ENCODE measurements at regions of chr20 and their contacts with region 1.

Region 1: GRCh38 chr20:63567386-63568169 is 6.5 kb downstream of the HELZ2 start:
- DNase-seq: peak; percentile 88 to 93 (median 92)
- H3K4me3 ChIP-seq: peak overlapping the region; percentile 11 to 73 (median 43)
- H3K4me3 Mint-ChIP-seq: peak overlapping the region; percentile 76 to 87
- H3K27ac ChIP-seq: peak overlapping the region; percentile 72 to 91
- H3K27ac Mint-ChIP-seq: peak overlapping the region; percentile 90 to 97 (median 97)
- H3K4me1 ChIP-seq: peaks cover 33 to 38% of the 10 kb centered on the region in 2 donors
- H3K4me1 Mint-ChIP-seq: peaks cover 26% of the 10 kb centered on the region
- H3K27me3 ChIP-seq: peaks cover 0 to 66% of the 10 kb centered on the region in 2 donors
- H3K27me3 Mint-ChIP-seq: peaks cover 28 to 75% (median 53%) of the 10 kb centered on the region in 3 donors
- CTCF ChIP-seq: peak; percentile 10

Region 2: DNA sequence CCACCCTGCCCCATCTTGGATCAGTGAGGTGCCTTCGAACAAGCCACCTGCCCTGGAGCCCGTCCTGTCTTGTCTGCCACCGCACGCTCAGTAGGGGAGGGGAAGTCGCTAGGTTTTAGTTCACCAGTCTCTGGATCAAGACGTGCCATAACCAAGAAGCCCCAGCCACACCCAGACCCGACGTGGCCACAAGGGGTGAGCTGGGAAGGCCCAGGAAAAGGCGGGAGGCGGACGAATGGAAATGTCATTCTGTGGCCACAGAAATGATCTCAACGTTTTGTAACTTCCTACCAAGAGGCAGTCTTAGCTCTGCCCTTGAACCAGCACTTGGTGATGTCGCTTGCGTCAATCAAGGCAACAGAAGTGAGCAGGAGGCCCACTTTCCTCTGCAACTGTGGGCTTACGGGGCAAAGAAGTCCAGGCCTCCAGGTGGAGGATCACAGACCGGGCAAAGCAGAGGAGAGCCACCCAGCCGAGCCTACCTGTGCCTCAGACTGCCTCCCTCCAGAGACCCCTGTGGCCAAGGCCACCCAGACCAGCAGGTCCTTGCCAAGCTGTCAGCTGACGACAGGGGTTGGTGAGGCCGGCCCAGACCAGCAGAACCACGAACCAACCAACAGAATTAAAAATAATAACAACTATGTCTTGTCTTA is 44.8 kb after region 1 on chr20:
- intact Hi-C with region 1: loop called in 1 of 2 experiments (anchors 2 kb)
- DNase-seq: peak; percentile 82 to 85 (median 84)
- H3K4me3 ChIP-seq: peak overlapping the region in 1 of 3 experiments; percentile 51
- H3K4me3 Mint-ChIP-seq: peak overlapping the region; percentile 53 to 73
- H3K27ac ChIP-seq: peak overlapping the region; percentile 54 to 87
- H3K27ac Mint-ChIP-seq: peak overlapping the region; percentile 88 to 96 (median 93)
- H3K4me1 ChIP-seq: peaks cover 26 to 29% of the 10 kb centered on the region in 2 donors
- H3K4me1 Mint-ChIP-seq: peaks cover 38% of the 10 kb centered on the region
- H3K27me3 ChIP-seq: no peaks in the 10 kb centered on the region
- H3K27me3 Mint-ChIP-seq: peaks cover 1 to 4% (median 3%) of the 10 kb centered on the region in 3 donors
- CTCF ChIP-seq: peak; percentile 16

Region 3: DNA sequence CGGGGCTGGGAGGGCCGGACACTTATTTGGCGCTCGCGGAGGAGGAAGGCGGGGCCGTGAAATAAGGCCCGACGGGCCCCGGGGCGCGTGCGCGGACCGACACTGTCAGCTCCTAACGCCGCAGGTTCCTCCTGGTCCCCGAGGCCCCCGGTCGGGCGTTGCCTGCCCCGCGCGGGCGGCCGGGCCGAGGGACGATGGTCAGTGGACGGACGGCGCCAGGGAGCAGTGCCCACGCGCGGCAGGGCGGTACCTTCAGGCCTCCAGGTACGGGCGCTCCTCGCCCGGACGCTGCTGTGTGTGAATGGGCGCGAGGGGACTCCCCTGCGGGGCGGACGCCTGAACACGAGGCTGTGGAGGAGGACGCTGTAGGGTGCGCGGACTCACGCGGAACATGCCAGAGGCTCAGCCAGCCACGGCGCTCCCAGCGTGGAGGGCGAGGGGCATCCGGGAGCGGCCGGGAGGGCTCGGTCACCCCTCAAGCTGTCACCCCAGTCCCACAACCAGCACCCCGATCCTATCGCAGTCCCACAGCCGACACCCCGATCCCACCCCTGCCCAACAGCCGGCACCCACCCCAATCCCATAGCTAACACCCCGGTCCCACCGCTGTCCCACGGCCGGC is 59.7 kb after region 1 on chr20:
- intact Hi-C with region 1: loop called in 1 of 2 experiments (anchors 5 kb)
- DNase-seq: peak; percentile 94 to 96 (median 95)
- H3K4me3 ChIP-seq: peak overlapping the region; percentile 91 to 96 (median 93)
- H3K4me3 Mint-ChIP-seq: peak overlapping the region; percentile 95 to 96
- H3K27ac ChIP-seq: peak overlapping the region; percentile 82 to 88
- H3K27ac Mint-ChIP-seq: peak overlapping the region; percentile 75 to 91 (median 83)
- H3K4me1 ChIP-seq: peaks cover 17 to 29% of the 10 kb centered on the region in 2 donors
- H3K4me1 Mint-ChIP-seq: peaks cover 30% of the 10 kb centered on the region
- H3K27me3 ChIP-seq: no peaks in the 10 kb centered on the region
- H3K27me3 Mint-ChIP-seq: peaks cover 0 to 2% (median 2%) of the 10 kb centered on the region in 3 donors
- CTCF ChIP-seq: no peak

Region 4: DNA sequence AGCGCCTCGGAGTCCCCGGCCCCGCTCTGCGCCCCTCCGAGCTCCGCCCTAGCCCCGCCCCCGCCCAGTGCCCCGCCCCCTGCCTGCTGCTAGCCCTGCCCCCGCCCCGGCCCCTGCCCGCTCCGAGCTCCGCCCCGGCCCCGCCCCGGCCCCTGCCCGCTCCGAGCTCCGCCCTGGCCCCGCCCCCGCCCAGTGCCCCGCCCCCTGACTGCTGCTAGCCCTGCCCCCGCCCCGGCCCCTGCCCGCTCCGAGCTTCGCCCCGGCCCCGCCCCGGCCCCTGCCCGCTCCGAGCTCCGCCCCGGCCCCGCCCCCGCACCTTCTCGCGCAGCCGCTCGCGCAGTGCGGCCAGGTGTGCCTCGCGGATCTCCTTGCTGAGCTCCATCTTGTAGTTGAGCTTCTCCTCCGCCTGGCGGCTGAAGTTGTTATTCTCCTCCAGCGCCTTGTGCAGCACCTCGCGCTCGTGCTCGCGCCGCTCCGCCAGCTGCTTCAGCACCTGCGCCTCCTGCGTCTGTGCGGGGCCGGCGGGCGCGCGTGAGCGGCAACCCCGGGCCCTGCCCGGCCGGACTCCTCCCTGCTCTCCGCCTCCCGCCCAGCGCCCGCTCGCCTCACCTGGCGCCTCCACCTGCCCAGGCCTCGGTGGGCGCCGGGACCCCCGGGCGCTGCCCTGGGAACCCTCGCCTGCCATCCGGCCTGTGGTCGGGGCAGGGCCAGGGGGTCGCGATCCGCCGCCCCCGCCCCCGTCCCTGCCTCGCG is 74.4 kb after region 1 on chr20:
- intact Hi-C with region 1: loop called in 1 of 2 experiments (anchors 5 kb)
- DNase-seq: peak; percentile 70 to 90 (median 76)
- H3K4me3 ChIP-seq: peak overlapping the region; percentile 74 to 93 (median 82)
- H3K4me3 Mint-ChIP-seq: peak overlapping the region; percentile 72 to 79
- H3K27ac ChIP-seq: peak overlapping the region; percentile 81 to 86
- H3K27ac Mint-ChIP-seq: peak overlapping the region in 5 of 7 donors; percentile 33 to 79 (median 63)
- H3K4me1 ChIP-seq: peaks cover 33 to 40% of the 10 kb centered on the region in 2 donors
- H3K4me1 Mint-ChIP-seq: peaks cover 33% of the 10 kb centered on the region
- H3K27me3 ChIP-seq: no peaks in the 10 kb centered on the region
- H3K27me3 Mint-ChIP-seq: peaks cover 6 to 18% (median 7%) of the 10 kb centered on the region in 3 donors
- CTCF ChIP-seq: peak; percentile 52

Region 5: GRCh38 chr20:63894358-63895201 is 327.0 kb after region 1 on chr20 and contains the start of gene DNAJC5:
- intact Hi-C with region 1: loop called in 1 of 2 experiments (anchors 10 kb)
- DNase-seq: peak; percentile 95 to 96 (median 95)
- H3K4me3 ChIP-seq: peak within 1 kb of the TSS; percentile 80 to 96 (median 80)
- H3K4me3 Mint-ChIP-seq: peak within 1 kb of the TSS; percentile 92 to 95
- H3K27ac ChIP-seq: peak within 1 kb of the TSS; percentile 90 to 93
- H3K27ac Mint-ChIP-seq: peak within 1 kb of the TSS; percentile 96 to 99 (median 98)
- H3K4me1 ChIP-seq: peaks cover 52 to 60% of the 10 kb centered on the region in 2 donors
- H3K4me1 Mint-ChIP-seq: peaks cover 55% of the 10 kb centered on the region
- H3K27me3 ChIP-seq: no peaks in the 10 kb centered on the region
- H3K27me3 Mint-ChIP-seq: no peaks in the 10 kb centered on the region
- CTCF ChIP-seq: no peak
- polyA plus RNA-seq, gene DNAJC5: 5.9 to 44.4 (median 7.4) TPM

Region 6: DNA sequence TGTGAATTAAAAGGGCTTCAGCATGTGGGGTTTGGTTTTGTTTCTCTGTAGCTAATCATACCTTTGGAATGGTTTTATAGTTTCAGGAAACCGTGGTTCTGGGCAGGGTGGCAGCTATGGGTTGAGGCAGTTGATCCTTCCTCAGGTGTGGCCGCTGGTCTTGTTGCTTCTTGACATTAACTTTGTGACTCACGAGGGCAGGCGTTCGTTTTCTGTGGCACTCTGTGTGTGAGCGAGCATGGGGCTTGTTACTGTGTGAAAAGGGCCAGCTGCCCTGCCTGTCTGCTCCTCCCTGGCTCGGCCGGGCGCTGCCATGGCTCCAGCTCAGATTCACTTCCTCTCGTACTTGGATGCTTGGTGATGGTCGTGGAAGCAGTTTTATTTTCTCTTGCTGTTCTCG is 343.6 kb after region 1 on chr20:
- intact Hi-C with region 1: no loop called
- DNase-seq: peak; percentile 51 to 65 (median 52)
- H3K4me3 ChIP-seq: no peak overlapping the region
- H3K4me3 Mint-ChIP-seq: peak overlapping the region; percentile 34 to 51
- H3K27ac ChIP-seq: peak overlapping the region; percentile 46 to 76
- H3K27ac Mint-ChIP-seq: peak overlapping the region; percentile 46 to 92 (median 84)
- H3K4me1 ChIP-seq: peaks cover 38 to 49% of the 10 kb centered on the region in 2 donors
- H3K4me1 Mint-ChIP-seq: peaks cover 62% of the 10 kb centered on the region
- H3K27me3 ChIP-seq: no peaks in the 10 kb centered on the region
- H3K27me3 Mint-ChIP-seq: no peaks in the 10 kb centered on the region
- CTCF ChIP-seq: no peak